CD4-positive, alpha-beta T cell (primary cell): ENCODE measurements at regions of chr13 and their contacts with region 1.

Region 1: DNA sequence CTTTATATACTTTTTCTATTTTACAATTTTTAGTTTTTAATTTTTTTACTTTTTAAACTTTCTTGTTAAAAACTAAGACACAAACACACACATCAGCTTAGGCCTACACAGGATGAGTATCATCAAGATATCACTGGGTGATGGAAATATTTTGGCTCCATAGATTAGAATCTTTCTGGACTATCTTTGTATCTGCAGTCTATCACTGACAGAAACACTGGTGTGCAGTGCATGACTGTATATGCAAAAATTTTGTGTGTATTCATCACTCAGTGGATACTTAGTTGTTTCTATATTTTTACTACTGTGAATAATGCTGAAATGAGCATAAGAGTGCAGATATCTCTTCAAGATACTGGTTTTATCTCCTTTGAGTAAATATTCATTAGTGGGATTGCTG is 68.0 kb upstream of the GPC6 start:
- DNase-seq: no peak
- ATAC-seq: no peak
- H3K4me3 ChIP-seq: no peak overlapping the region
- H3K4me3 Mint-ChIP-seq: no peak overlapping the region
- H3K27ac ChIP-seq: no peak overlapping the region
- H3K27ac Mint-ChIP-seq: no peak overlapping the region
- H3K4me1 ChIP-seq: no peaks in the 10 kb centered on the region
- H3K4me1 Mint-ChIP-seq: no peaks in the 10 kb centered on the region
- H3K27me3 ChIP-seq: no peaks in the 10 kb centered on the region
- H3K27me3 Mint-ChIP-seq: no peaks in the 10 kb centered on the region
- CTCF ChIP-seq: no peak

Region 2: GRCh38 chr13:93146584-93147297 is 11.8 kb before region 1 on chr13:
- CTCF ChIA-PET with region 1: no interaction called
- POLR2A ChIA-PET with region 1: no interaction called
- intact Hi-C with region 1: loop called in 1 of 2 experiments (anchors 1 kb)
- DNase-seq: no peak
- ATAC-seq: no peak
- H3K4me3 ChIP-seq: no peak overlapping the region
- H3K4me3 Mint-ChIP-seq: no peak overlapping the region
- H3K27ac ChIP-seq: no peak overlapping the region
- H3K27ac Mint-ChIP-seq: no peak overlapping the region
- H3K4me1 ChIP-seq: no peaks in the 10 kb centered on the region
- H3K4me1 Mint-ChIP-seq: no peaks in the 10 kb centered on the region
- H3K27me3 ChIP-seq: no peaks in the 10 kb centered on the region
- H3K27me3 Mint-ChIP-seq: no peaks in the 10 kb centered on the region
- CTCF ChIP-seq: no peak